GM10248 (cell line): ENCODE measurements at regions of chr3 and their contacts with region 1.

Region 1: DNA sequence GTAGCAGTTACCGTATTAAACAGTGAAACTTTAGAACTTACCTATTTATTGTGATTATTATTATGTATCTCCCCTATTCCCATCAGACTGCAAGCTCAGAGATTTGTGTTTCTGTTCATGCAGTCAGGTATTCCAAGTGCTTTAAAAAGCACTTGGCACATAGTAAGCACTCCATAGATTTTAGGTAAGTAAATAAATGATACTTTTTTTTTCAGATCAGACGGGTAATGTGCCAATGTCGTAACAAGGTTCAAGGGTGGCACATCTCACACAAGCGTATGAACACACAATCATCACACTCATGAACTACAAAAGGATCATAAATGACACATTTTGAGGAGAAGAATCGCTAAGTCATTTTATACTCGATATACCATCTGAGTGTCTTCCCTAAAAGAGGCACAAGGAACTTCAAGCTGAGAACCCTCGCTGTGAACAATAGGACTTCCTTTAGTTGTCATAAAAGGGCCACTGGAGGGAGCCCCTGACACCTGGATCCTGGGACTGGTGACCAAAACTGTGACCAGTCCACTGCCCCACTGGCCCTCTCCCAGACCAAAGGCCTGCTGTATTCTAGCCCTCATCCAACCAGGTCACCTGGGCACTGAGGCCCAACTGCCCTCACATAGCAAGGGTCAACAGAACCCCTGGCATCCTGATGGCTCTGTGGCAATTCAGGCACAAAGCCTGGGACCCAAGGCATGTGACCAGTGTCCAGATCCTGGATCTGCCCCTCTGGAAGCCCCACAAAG is 32.1 kb downstream of the KIF9 start:
- DNase-seq: peak; percentile 53
- CTCF ChIP-seq: peak; percentile 43

Region 2: GRCh38 chr3:47096959-47097358 is 153.5 kb before region 1 on chr3:
- CTCF ChIA-PET with region 1: no interaction called
- POLR2A ChIA-PET with region 1: no interaction called
- DNase-seq: no peak
- CTCF ChIP-seq: no peak

Region 3: GRCh38 chr3:47143068-47143467 is 107.4 kb before region 1 on chr3:
- CTCF ChIA-PET with region 1: no interaction called
- POLR2A ChIA-PET with region 1: no interaction called
- DNase-seq: no peak
- CTCF ChIP-seq: no peak

Region 4: DNA sequence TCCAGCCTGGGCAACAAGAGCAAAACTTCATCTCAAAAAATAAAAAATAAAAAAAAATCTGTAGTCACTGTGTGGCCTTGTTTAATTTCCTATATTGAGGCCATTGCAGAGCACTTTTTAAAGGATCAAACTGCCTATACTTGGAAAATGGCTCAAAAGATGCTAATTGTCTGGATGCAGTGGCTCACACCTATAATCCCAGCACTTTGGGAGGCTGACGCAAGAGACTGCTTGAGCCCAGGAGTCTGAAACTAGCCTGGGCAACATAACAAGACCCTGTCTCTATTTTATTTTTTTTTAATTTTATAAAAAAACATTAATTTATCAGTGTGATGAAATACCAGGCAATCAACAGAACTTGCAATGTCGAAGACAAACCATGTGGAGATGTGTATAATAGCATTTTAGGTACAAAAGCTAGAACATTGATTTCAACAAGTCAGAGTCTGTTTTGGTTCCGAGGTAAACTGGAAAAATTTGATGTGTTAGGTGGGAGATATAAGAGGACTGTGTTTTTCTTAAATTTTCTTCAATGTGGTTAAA is 39.6 kb before region 1 on chr3:
- CTCF ChIA-PET with region 1: no interaction called
- POLR2A ChIA-PET with region 1: no interaction called
- DNase-seq: no peak
- CTCF ChIP-seq: no peak

Region 5: DNA sequence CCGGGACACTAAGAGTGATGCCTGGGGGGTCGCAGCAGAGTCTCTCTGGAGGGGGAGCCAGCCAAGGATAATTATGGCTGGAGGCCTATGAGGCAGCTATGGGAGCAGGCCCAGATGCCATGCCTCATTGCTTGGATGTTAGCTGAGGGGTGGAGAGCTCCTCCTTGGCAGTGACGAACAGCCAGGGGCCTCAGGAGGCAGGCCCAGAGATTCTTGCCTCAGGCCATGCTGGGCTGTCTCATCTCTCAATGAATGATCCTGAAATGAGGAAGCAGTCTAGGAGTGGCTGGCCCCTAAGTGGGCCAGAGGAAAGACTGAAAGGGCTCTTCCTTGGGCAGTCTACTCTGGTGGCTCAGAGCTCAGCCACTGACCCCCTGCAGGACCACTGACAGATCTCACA is 10.8 kb after region 1 on chr3:
- CTCF ChIA-PET with region 1: interaction called, 17 read pairs
- POLR2A ChIA-PET with region 1: no interaction called
- DNase-seq: no peak
- CTCF ChIP-seq: no peak

Region 6: GRCh38 chr3:47266709-47267489 is 16.4 kb after region 1 on chr3:
- CTCF ChIA-PET with region 1: interaction called, 17 read pairs
- POLR2A ChIA-PET with region 1: no interaction called
- DNase-seq: peak; percentile 60
- CTCF ChIP-seq: no peak